ENCODE measurements at regions of chr6 and their contacts with region 1.

Region 1: GRCh38 chr6:41505122-41506049 is 40.8 kb upstream of the FOXP4 start:
- DNase-seq: peak; percentile 72
- H3K4me3 ChIP-seq: peak overlapping the region in 3 of 4 donors; percentile 1 to 51 (median 29)
- H3K27ac ChIP-seq: peak overlapping the region; percentile 71 to 79 (median 75)
- H3K4me1 ChIP-seq: peaks cover 6 to 28% (median 24%) of the 10 kb centered on the region in 4 donors
- H3K27me3 ChIP-seq: peaks cover 30% of the 10 kb centered on the region
- CTCF ChIP-seq: no peak
- EP300 ChIP-seq: no peak
- POLR2A ChIP-seq: no peak

Region 2: DNA sequence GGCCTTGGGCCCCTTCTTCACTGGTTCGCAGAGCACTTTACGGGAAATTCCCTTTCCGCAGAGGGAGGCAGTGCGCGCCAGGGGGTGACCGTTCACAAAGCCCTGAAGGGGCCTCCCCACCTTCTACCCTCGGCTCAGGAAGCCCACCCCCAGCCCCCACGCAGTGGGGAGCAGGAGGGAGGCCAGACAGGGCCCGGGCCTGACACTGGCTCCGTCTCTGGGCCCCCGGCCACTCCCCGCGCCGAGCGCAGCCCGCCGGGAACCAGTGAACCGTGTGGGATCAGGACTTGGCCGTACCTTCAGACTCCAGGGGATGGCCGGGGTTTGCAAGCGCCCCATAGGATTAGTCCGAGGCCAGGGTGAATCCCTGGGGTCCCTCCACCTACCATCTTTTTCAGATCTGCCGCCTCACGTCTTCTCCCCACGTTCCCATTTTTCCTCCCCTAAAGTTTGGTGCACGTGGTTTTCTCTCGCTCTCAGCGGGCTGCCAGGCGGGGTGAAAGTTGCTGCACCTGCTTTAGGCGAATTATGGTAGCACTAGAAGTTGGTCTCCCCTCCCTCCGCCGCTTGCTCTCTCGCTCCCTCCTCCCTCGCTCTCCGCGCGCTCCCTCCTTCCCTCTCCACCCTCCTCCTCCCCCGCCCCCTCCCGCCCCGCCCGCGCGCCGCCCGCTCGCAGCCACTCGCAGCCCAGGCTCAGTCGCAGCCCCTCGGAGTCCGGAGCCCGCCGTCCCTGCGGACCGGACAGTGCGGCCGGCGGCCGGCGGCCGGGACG is 40.5 kb after region 1 on chr6 and contains the start of gene FOXP4:
- in situ Hi-C with region 1: no loop called
- intact Hi-C with region 1: loop called (anchors 2 kb)
- DNase-seq: peak; percentile 92
- H3K4me3 ChIP-seq: peak within 1 kb of the TSS; percentile 72 to 93 (median 84)
- H3K27ac ChIP-seq: peak within 1 kb of the TSS; percentile 87 to 93 (median 90)
- H3K4me1 ChIP-seq: peaks cover 7 to 40% (median 26%) of the 10 kb centered on the region in 4 donors
- H3K27me3 ChIP-seq: peaks cover 5% of the 10 kb centered on the region
- CTCF ChIP-seq: no peak
- EP300 ChIP-seq: no peak
- POLR2A ChIP-seq: no peak
- total RNA-seq, gene FOXP4: 13.8 to 45.6 (median 17.2) TPM

Measured in transverse colon (tissue), 4 donors.